ENCODE measurements at regions of chr14 and their contacts with region 1.

Region 1: DNA sequence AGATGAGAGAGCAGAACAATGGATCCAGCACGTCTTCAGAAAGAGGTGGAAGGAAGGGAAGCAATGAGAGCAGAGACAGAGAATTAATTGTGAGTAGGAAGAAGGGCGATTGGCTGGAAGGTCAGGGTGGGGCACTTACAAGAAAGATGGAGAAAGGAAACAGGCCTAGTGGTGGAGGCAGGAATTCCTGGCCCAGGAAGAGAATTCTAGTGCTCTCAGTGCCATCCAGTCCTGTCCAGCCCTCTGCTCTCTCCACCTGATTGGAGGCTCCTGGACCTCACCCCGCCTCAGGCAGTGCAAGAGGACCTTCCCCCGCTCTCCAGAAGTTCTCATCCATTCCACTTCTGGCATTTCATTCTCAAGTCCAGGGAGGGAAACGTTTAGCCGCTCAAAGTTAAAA is 43.0 kb downstream of the NGB start:
- DNase-seq: no peak
- H3K4me3 ChIP-seq: no peak overlapping the region
- H3K27ac ChIP-seq: no peak overlapping the region
- H3K4me1 ChIP-seq: no peaks in the 10 kb centered on the region
- H3K27me3 ChIP-seq: no peaks in the 10 kb centered on the region
- CTCF ChIP-seq: no peak
- EP300 ChIP-seq: no peak
- POLR2A ChIP-seq: no peak

Region 2: GRCh38 chr14:77181603-77182437 is 46.2 kb before region 1 on chr14 and contains the start of gene TMEM63C:
- in situ Hi-C with region 1: no loop called
- intact Hi-C with region 1: loop called (anchors 1 kb)
- DNase-seq: peak; percentile 85
- H3K4me3 ChIP-seq: peak within 1 kb of the TSS; percentile 42 to 52 (median 48)
- H3K27ac ChIP-seq: peak within 1 kb of the TSS; percentile 25 to 37 (median 30)
- H3K4me1 ChIP-seq: peaks cover 8 to 47% (median 31%) of the 10 kb centered on the region in 4 donors
- H3K27me3 ChIP-seq: peaks cover 28% of the 10 kb centered on the region
- CTCF ChIP-seq: no peak
- EP300 ChIP-seq: no peak
- POLR2A ChIP-seq: peak; percentile 78
- total RNA-seq, gene TMEM63C: 20.1 to 60.2 (median 33.9) TPM

Region 3: DNA sequence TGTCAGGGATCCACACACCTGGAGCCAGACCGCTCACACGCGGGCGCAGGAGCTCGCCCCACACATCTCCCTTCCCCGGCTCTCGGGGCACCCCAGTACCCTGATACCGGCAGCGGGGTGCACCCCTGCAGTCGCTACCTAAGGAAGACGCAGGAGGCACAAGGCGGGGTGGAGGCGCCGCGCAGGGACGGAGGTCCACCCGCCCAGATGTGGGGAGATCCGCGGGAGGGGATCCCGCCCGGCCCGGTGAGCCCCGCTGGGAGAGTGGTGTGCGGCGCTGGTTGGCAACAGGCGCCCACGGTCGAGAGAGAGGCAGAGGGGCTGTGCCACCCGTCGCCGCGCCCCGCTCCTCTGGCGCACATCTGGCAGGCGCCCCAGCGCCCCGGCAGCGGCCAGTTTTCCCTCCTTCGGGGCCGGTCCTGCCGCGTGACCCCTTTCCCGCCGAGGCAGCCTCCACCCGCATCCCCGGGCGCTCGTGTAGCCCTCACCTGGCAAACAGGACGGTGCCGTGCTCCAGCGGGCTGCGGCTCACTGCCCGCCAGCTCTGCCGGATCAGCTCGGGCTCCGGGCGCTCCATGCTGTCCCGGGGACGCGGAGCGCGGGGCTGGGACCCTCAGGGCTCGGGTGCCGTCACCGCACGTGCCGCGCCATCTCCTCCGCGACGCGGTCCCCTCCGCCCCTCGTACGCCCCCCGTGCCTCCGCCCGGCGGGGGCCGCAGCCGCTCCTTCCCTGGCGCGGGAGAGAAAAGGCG is 42.5 kb after region 1 on chr14:
- in situ Hi-C with region 1: no loop called
- intact Hi-C with region 1: loop called (anchors 1 kb)
- DNase-seq: no peak
- H3K4me3 ChIP-seq: no peak overlapping the region
- H3K27ac ChIP-seq: no peak overlapping the region
- H3K4me1 ChIP-seq: peaks cover 0 to 6% (median 2%) of the 10 kb centered on the region in 4 donors
- H3K27me3 ChIP-seq: peaks cover 49% of the 10 kb centered on the region
- CTCF ChIP-seq: no peak
- EP300 ChIP-seq: no peak
- POLR2A ChIP-seq: no peak